ENCODE measurements at regions of chr19 and their contacts with region 1.

Region 1: DNA sequence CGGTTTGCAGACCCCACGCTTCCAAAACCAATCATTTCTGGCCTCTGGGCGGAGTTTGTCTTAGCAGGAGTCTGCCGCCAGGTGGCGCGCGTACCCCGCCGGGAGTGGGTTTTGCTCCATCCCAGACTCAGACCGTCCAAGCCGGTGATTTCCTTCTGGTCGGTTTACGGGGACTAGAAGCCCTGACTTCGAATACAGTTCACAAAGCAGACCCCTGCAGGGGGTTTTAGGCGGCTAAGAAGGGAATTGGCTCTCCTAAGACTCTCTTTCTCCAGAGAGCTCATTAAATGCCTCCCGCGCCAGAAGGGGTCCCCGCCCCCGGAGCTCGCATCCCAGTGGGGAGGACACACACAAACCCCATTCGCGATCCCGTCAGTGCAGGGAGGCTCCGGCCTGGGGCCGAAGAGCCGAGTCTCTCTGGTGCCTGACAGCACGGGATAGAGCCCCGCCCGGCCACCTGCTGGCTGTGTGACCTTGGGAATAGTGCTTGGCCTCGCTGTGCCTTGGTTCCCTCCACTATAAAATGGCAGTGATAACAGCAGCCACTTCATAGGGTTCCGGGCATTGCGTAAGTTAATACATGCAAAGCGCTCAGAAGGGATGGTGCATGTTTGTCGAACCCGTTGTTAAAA is 8.6 kb upstream of the NUP62 start:
- DNase-seq: peak; percentile 81 to 88
- ATAC-seq: peak; percentile 85 to 93 (median 88)
- H3K4me3 ChIP-seq: peak overlapping the region; percentile 36
- H3K27ac ChIP-seq: no peak overlapping the region
- H3K4me1 ChIP-seq: no peaks in the 10 kb centered on the region
- H3K27me3 ChIP-seq: peaks cover 0 to 2% (median 0%) of the 10 kb centered on the region in 3 donors
- CTCF ChIP-seq: peak; percentile 96

Region 2: GRCh38 chr19:49968279-49968922 is 30.5 kb after region 1 on chr19:
- intact Hi-C with region 1: no loop called
- DNase-seq: no peak
- ATAC-seq: no peak
- H3K4me3 ChIP-seq: no peak overlapping the region
- H3K27ac ChIP-seq: no peak overlapping the region
- H3K4me1 ChIP-seq: no peaks in the 10 kb centered on the region
- H3K27me3 ChIP-seq: peaks cover 0 to 22% (median 0%) of the 10 kb centered on the region in 3 donors
- CTCF ChIP-seq: no peak

Region 3: DNA sequence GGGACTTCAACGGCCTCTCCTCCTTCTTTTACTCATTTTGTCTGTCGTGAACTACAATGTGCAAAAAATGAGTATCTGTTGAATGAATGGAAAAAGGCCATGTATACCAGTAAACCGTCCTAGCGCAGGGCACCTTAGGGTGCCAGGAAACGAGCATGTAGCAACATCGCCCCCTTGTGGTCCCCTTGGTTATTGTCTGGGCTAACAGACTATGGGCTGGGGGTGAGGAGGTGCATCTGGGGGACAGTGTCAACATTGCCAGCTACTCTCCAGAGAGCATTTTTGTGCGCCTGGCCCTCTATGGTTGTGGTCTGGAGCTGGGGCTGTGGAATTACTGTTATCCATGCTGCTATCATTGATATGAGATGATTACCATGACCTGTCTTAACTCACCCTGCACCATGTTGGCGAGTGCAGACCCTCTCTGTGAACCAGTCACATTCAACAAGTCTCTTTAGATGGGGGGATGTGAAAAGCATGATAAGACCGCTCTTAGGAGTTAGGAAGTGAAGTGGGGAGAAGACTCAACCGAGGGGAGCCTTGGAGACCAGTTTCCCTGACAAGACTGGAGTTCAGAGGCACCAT is 45.9 kb after region 1 on chr19:
- intact Hi-C with region 1: loop called (anchors 1 to 5 kb)
- DNase-seq: peak; percentile 34 to 75
- ATAC-seq: peak; percentile 49 to 75 (median 60)
- H3K4me3 ChIP-seq: no peak overlapping the region
- H3K27ac ChIP-seq: no peak overlapping the region
- H3K4me1 ChIP-seq: no peaks in the 10 kb centered on the region
- H3K27me3 ChIP-seq: no peaks in the 10 kb centered on the region
- CTCF ChIP-seq: peak; percentile 78

Measured in psoas muscle (tissue), 8 donors.